ENCODE measurements at regions of chr17 and their contacts with region 1.

Region 1: DNA sequence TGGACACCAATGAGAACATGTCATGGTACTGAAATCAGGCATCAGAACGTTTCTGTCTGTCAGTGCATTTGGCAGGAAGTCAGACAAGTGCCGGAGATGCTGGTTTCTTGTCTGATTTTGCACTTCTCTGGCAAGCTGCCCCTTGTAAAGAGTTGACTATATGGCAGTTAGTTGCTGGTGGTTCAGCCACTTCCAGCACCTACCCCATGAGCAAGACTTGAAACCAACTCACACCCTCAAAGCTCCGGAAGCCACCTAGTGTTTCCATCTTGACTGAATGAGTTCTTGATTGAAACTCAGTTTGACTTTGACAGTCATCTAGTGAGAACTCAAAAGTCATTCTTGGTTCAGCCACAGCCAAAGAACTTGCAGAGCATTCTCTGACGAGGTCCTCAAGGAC is 225.1 kb downstream of the SPECC1 start:
- DNase-seq: peak; percentile 86
- H3K4me3 Mint-ChIP-seq: peak overlapping the region; percentile 18
- H3K27ac Mint-ChIP-seq: peak overlapping the region; percentile 84
- H3K4me1 Mint-ChIP-seq: peaks cover 28% of the 10 kb centered on the region
- H3K27me3 Mint-ChIP-seq: no peaks in the 10 kb centered on the region

Region 2: GRCh38 chr17:19977311-19978208 is 256.7 kb before region 1 on chr17 and contains the start of gene AKAP10:
- CTCF ChIA-PET with region 1: no interaction called
- POLR2A ChIA-PET with region 1: no interaction called
- intact Hi-C with region 1: loop called (anchors 1 kb)
- DNase-seq: peak; percentile 96
- H3K4me3 Mint-ChIP-seq: peak within 1 kb of the TSS; percentile 94
- H3K27ac Mint-ChIP-seq: peak within 1 kb of the TSS; percentile 97
- H3K4me1 Mint-ChIP-seq: peaks cover 49% of the 10 kb centered on the region
- H3K27me3 Mint-ChIP-seq: no peaks in the 10 kb centered on the region
- total RNA-seq, gene AKAP10: 28.4 to 31.8 TPM

Region 3: GRCh38 chr17:20073055-20073979 is 161.0 kb before region 1 on chr17:
- CTCF ChIA-PET with region 1: no interaction called
- POLR2A ChIA-PET with region 1: no interaction called
- intact Hi-C with region 1: no loop called
- DNase-seq: peak; percentile 57
- H3K4me3 Mint-ChIP-seq: peak overlapping the region; percentile 33
- H3K27ac Mint-ChIP-seq: peak overlapping the region; percentile 40
- H3K4me1 Mint-ChIP-seq: peaks cover 33% of the 10 kb centered on the region
- H3K27me3 Mint-ChIP-seq: no peaks in the 10 kb centered on the region

Region 4: DNA sequence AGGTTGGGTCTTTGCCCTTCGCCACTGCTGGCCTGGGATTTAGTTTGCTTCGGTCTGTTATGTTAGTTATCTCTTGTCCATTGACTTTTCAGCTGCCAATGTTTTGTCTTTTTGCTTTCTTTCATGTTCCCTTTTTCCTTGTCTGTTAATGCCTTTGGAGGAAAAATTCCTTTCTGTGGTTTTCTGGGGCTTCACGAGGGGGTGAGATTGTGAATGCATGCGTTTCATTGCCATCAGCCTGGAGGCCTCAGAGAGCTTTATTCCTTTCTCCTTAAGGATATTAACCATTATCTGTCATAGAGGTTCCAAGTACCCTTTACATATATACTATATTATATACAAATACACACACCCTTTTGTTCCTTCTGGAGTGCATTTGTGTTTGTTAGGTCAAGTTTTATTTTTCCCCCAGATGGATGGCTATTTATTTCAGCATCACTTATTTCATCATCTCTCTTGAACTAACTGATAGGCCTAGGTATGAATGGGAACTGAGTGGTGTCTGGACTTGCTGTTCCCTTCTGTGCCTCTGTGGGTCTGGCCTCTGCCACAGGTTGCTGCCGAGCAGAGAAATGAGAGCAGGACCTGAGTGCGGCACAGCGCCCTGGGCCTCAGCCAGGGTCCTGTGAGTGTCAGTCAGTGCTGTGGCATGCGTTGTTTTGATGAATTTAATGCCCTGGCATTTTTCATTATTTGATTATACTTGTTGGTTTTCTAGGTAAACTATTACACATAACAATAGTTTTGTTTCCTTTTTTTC is 39.6 kb after region 1 on chr17:
- CTCF ChIA-PET with region 1: no interaction called
- POLR2A ChIA-PET with region 1: no interaction called
- intact Hi-C with region 1: loop called (anchors 2 kb)
- DNase-seq: peak; percentile 36
- H3K4me3 Mint-ChIP-seq: peak overlapping the region; percentile 18
- H3K27ac Mint-ChIP-seq: peak overlapping the region; percentile 36
- H3K4me1 Mint-ChIP-seq: peaks cover 72% of the 10 kb centered on the region
- H3K27me3 Mint-ChIP-seq: no peaks in the 10 kb centered on the region

Region 5: DNA sequence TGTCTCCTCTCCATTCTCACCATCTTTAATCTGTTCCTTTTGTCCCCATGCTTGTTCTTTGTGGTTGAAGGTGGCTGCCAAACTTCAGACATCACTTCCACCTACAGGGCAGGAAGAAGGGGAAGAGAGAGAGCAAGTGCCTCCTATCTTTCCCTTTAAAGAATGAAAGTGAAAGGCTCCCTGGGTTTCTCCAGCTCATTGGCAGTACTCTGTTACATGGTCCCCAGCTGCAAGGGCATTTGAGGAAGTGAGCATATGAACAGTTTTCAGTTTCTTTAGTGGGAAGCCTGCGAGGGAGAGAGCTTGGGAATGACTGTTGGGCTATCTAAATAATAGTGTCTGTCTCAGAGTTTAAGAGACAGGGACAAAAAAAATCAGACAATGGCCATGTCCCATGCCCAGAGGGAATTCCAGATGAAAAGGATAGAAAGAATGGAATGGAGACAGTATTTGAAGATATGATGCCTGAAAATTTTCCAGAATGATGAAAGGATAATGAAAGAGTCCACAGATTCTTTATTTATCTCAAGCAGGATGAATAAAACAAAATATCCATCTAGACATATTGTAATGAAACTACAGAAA is 73.1 kb after region 1 on chr17:
- CTCF ChIA-PET with region 1: no interaction called
- POLR2A ChIA-PET with region 1: no interaction called
- intact Hi-C with region 1: loop called (anchors 5 kb)
- DNase-seq: no peak
- H3K4me3 Mint-ChIP-seq: no peak overlapping the region
- H3K27ac Mint-ChIP-seq: no peak overlapping the region
- H3K4me1 Mint-ChIP-seq: no peaks in the 10 kb centered on the region
- H3K27me3 Mint-ChIP-seq: no peaks in the 10 kb centered on the region